BJ (cell line): ENCODE measurements at regions of chr2 and their contacts with region 1.

Region 1: DNA sequence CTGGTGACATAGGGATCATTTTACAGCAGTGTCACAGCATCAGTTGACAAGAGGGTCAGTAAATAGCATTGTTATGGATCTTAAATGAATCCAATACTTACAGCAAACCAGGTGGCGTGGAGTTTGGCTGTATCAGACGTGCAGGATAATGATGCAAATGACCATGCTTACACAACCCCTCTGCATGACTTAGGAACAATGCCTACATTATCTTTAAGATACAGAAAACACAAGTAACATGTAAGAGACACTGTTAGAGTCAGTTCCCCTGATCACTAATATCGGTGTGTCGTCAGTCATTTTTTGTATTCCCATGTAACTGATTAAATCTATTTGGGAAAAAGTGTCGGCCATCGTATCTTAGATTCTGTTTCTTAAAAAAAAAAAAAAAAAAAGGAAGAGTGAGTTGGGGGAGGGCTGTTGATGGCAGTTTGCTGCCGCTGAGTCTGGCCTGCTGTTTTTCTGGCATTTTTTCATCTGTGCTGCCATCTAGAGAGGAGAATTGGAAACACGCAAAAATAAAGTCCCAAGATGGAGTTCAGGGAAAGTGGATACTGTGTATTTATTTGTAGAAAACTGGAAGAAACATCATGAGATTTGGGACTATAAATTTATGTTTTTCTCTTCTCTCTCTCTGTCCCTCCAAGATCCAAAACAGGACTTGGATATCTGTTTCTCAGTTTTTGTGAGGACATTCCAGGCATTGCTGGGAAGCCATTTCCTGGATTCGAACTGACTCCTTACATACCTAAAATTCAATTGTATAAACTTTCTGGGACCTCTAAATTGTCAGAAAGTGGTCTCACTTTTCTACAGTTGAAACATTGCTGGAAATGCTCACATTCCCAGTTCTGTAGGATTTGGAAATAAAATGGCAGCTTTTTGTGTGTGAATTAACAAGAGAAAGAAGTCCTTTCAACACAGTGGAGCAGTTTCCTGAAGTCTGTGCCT is 60.3 kb upstream of the AGPS start:
- DNase-seq: no peak
- H3K4me3 ChIP-seq: no peak overlapping the region
- H3K27me3 ChIP-seq: no peaks in the 10 kb centered on the region; the same call in 1 of the 2 replicates
- CTCF ChIP-seq: peak; percentile 60

Region 2: DNA sequence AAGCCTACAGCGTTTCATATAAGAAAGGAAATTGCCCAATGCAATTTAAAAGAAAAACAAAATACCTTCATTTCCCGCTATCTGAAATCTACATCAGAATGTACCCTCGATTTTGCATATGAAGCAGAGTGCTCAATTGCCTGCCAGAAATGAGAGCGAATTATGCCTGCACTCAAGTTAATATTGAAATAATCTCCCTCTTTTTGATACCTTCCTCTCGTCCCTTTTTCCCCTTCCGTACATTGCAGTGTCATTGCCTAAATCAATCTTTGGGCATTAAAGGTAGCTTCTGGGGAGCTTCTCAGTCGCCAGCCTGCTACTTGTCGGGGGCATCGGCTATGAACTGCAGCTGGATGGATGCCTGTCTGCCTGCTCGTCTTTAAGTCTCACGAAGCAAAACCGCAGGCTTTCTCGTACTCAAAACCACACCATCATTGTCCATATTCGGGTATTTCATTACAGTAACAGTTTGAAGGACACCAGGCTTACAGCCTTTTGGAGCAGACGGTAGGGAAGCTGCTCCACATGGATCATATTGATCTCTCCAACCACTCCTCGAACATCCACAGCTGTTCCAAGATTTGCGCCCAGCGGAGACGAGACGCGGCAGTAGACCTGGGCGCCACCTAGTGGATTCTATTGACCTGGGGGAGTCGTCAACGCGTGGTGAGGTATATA is 183.7 kb before region 1 on chr2:
- CTCF ChIA-PET with region 1: interaction called, 11 read pairs
- POLR2A ChIA-PET with region 1: no interaction called
- DNase-seq: no peak
- H3K4me3 ChIP-seq: peak overlapping the region; percentile 35
- H3K27me3 ChIP-seq: peaks cover 17% of the 10 kb centered on the region
- CTCF ChIP-seq: peak; percentile 95

Region 3: DNA sequence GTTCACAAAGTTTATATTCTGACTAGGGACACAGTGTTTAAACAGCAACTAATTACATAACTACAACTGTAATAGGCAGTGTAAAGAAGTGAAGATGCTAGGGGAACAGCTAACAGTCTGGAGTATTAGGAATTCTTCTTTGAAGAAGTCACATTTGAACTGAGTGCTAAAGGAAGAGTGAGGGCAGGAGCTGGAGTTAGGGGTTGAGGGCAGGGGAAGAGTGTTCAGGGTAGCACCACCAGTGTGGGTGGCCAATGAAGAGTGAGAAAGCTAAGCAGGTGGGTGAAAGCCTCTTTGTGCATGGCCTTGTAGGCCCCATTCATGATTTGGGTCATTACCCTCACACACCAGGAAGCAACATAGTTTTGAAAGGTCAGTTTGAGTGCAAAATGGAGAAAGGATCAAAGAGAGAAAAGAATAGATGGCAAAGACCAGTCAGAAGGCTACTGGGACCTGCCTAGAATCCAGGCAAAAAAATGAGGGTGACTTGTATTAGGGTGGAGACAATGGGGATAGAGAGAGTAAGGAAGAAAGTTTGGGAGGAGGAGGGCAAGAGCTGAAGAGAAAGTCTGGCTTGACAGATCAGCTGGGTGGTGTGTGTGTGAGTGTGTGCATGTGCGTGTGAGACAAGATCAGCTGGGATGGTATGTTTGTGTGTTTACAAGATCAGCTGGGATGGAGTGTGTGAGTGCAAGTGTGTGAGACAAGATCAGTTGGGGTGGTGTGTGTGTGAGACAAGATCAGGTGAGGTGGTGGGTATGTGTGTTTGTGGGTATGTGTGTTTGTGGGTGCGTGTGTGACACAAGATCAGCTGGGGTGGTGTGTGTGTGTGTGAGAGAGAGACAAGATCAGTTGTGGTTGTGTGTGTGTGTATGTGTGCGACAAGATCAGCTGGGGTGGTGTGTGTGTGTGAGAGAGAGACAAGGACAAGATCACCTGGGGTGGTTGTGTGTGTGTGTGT is 16.7 kb after region 1 on chr2:
- CTCF ChIA-PET with region 1: interaction called, 12 read pairs
- POLR2A ChIA-PET with region 1: no interaction called
- DNase-seq: no peak
- H3K4me3 ChIP-seq: no peak overlapping the region
- H3K27me3 ChIP-seq: no peaks in the 10 kb centered on the region
- CTCF ChIP-seq: no peak

Region 4: GRCh38 chr2:177419274-177419673 is 87.0 kb after region 1 on chr2:
- CTCF ChIA-PET with region 1: interaction called, 78 read pairs
- POLR2A ChIA-PET with region 1: no interaction called
- DNase-seq: no peak
- H3K4me3 ChIP-seq: no peak overlapping the region
- H3K27me3 ChIP-seq: no peaks in the 10 kb centered on the region
- CTCF ChIP-seq: no peak

Region 5: DNA sequence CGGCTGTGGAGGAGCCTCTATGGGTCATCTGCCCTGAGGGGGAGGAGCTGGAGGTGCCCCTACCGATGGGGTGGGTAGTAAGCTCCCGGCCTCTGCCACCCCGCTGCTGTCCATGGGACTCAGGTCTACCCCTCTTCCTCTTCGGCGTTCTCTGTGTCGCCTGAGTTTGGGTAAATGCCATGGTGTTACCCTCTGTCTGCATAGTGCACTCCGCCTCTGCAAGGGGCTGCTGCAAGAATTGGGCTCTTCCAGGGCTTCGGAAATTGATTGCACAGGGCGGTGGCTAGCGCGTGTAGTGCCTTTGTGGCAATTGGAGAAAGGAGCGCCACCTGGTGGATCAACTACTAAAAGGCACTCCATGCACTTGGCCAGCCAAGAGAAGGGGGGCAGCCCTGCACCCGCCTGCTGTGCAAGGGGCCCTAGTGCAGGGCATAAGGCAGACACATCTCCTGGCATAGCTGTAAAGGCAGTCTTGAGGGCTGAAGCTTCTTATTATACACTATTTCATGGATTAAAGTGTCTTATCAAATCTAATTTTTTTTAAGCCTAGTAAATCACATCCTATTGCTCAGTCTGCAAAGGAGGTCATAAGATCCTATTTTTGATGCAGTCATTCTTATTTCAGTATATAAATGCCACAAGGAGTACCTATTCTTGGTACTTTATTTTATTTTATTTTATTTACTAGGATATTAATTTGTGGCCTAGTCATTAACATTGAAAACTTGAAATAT is 431.4 kb after region 1 on chr2:
- CTCF ChIA-PET with region 1: interaction called, 17 read pairs
- POLR2A ChIA-PET with region 1: no interaction called
- DNase-seq: no peak
- H3K4me3 ChIP-seq: no peak overlapping the region
- H3K27me3 ChIP-seq: no peaks in the 10 kb centered on the region; the same call in 1 of the 2 replicates
- CTCF ChIP-seq: peak; percentile 84